CD4-positive, alpha-beta memory T cell (primary cell): ENCODE measurements at regions of chr12 and their contacts with region 1.

Region 1: DNA sequence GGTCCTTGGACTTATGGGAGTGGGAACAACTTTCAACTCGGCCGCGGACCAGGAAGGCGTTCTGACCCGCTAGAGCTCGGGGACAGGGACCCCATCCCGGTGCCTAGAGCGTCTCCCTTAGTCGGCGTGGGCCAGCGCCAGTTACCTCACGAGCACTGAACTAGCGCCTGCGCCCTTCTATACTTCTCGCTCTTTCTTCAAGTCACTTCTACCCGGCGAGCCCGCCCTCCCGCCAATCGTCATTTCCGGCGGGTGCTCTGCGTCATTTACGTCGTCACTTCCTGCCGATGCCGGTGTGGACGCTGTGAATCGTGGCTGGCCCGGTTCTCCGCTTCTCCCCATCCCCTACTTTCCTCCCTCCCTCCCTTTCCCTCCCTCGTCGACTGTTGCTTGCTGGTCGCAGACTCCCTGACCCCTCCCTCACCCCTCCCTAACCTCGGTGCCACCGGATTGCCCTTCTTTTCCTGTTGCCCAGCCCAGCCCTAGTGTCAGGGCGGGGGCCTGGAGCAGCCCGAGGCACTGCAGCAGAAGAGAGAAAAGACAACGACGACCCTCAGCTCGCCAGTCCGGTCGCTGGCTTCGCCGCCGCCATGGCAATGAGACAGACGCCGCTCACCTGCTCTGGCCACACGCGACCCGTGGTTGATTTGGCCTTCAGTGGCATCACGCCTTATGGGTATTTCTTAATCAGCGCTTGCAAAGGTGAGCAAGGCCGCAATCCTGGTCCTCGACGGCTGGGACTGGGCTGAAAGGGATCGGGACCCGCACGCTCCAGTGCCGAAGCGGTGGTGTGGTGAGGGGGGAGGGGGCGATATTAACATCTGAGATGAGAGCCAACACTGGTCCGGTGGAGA is at the start of gene STRAP:
- DNase-seq: peak; percentile 96 to 97 (median 97)
- H3K4me3 ChIP-seq: peak within 1 kb of the TSS; percentile 90 to 98
- H3K4me3 Mint-ChIP-seq: peak within 1 kb of the TSS; percentile 96 to 99 (median 98)
- H3K27ac ChIP-seq: peak within 1 kb of the TSS; percentile 95
- H3K27ac Mint-ChIP-seq: peak within 1 kb of the TSS; percentile 99 to 100 (median 100)
- H3K4me1 ChIP-seq: peaks cover 51% of the 10 kb centered on the region
- H3K4me1 Mint-ChIP-seq: peaks cover 38 to 66% (median 53%) of the 10 kb centered on the region in 4 donors
- H3K27me3 ChIP-seq: no peaks in the 10 kb centered on the region
- H3K27me3 Mint-ChIP-seq: no peaks in the 10 kb centered on the region
- total RNA-seq, gene STRAP: 46.1 to 49.1 TPM

Region 2: GRCh38 chr12:15789220-15790171 is 92.8 kb before region 1 on chr12 and contains the start of gene EPS8:
- CTCF ChIA-PET with region 1: no interaction called
- POLR2A ChIA-PET with region 1: interaction called, 9 read pairs
- intact Hi-C with region 1: loop called (anchors 1 kb)
- DNase-seq: peak; percentile 85 to 90 (median 90)
- H3K4me3 ChIP-seq: peak within 1 kb of the TSS; percentile 58 to 78
- H3K4me3 Mint-ChIP-seq: peak within 1 kb of the TSS; percentile 90 to 98 (median 96)
- H3K27ac ChIP-seq: peak within 1 kb of the TSS; percentile 38
- H3K27ac Mint-ChIP-seq: peak within 1 kb of the TSS; percentile 86 to 93 (median 90)
- H3K4me1 ChIP-seq: peaks cover 19% of the 10 kb centered on the region
- H3K4me1 Mint-ChIP-seq: peaks cover 12 to 19% (median 15%) of the 10 kb centered on the region in 4 donors
- H3K27me3 ChIP-seq: peaks cover 21% of the 10 kb centered on the region
- H3K27me3 Mint-ChIP-seq: peaks cover 12 to 29% of the 10 kb centered on the region in 2 donors
- total RNA-seq, gene EPS8: 2.6 to 3.8 TPM

Region 3: GRCh38 chr12:15863984-15864383 is 18.4 kb before region 1 on chr12:
- CTCF ChIA-PET with region 1: no interaction called
- POLR2A ChIA-PET with region 1: no interaction called
- intact Hi-C with region 1: no loop called
- DNase-seq: no peak
- H3K4me3 ChIP-seq: no peak overlapping the region
- H3K4me3 Mint-ChIP-seq: peak overlapping the region in 7 of 8 donors; percentile 14 to 43 (median 32)
- H3K27ac ChIP-seq: no peak overlapping the region
- H3K27ac Mint-ChIP-seq: no peak overlapping the region
- H3K4me1 ChIP-seq: no peaks in the 10 kb centered on the region
- H3K4me1 Mint-ChIP-seq: peaks cover 0 to 5% (median 4%) of the 10 kb centered on the region in 4 donors
- H3K27me3 ChIP-seq: no peaks in the 10 kb centered on the region
- H3K27me3 Mint-ChIP-seq: peaks cover 11 to 27% of the 10 kb centered on the region in 2 donors

Region 4: GRCh38 chr12:15910864-15911721 is 28.7 kb after region 1 on chr12 and contains the start of gene DERA:
- CTCF ChIA-PET with region 1: interaction called, 8 read pairs
- POLR2A ChIA-PET with region 1: interaction called, 23 read pairs
- intact Hi-C with region 1: loop called (anchors 1 kb)
- DNase-seq: peak; percentile 49 to 65 (median 56)
- H3K4me3 ChIP-seq: peak within 1 kb of the TSS; percentile 70 to 92
- H3K4me3 Mint-ChIP-seq: peak within 1 kb of the TSS; percentile 89 to 96 (median 94)
- H3K27ac ChIP-seq: peak within 1 kb of the TSS; percentile 75
- H3K27ac Mint-ChIP-seq: peak within 1 kb of the TSS; percentile 74 to 96 (median 91)
- H3K4me1 ChIP-seq: peaks cover 7% of the 10 kb centered on the region
- H3K4me1 Mint-ChIP-seq: peaks cover 15 to 20% (median 18%) of the 10 kb centered on the region in 4 donors
- H3K27me3 ChIP-seq: no peaks in the 10 kb centered on the region
- H3K27me3 Mint-ChIP-seq: no peaks in the 10 kb centered on the region
- total RNA-seq, gene DERA: 11.2 to 11.4 TPM